ENCODE measurements at regions of chr6 and their contacts with region 1.

Region 1: GRCh38 chr6:112163295-112164257 is 76.2 kb downstream of the FAM229B start:
- DNase-seq: peak; percentile 90
- ATAC-seq: peak; percentile 98
- H3K4me3 Mint-ChIP-seq: peak overlapping the region; percentile 42
- H3K27ac Mint-ChIP-seq: no peak overlapping the region
- H3K4me1 Mint-ChIP-seq: peaks cover 12% of the 10 kb centered on the region
- H3K27me3 Mint-ChIP-seq: peaks cover 42% of the 10 kb centered on the region
- CTCF ChIP-seq: peak; percentile 97

Region 2: DNA sequence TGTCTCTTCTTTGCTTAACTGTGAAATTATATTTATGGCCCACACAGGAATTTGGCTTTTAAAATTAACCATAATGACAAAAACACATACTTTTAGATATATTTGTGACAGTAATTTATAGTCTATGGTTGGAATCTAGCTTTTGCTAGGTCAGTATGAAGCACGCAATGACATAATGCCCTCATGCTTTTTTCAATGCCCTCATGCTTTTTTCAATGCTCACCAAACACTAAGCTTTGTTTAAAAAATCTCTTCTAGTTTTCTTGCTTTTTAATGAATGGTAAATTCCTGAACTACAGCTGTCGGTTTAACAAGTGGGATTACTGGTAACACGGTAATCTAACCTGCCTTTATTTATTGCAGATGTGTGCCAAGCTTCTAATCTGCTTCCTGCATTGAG is 97.0 kb before region 1 on chr6:
- CTCF ChIA-PET with region 1: interaction called, 11 read pairs
- POLR2A ChIA-PET with region 1: no interaction called
- intact Hi-C with region 1: no loop called
- DNase-seq: no peak
- ATAC-seq: no peak
- H3K4me3 Mint-ChIP-seq: no peak overlapping the region
- H3K27ac Mint-ChIP-seq: no peak overlapping the region
- H3K4me1 Mint-ChIP-seq: no peaks in the 10 kb centered on the region
- H3K27me3 Mint-ChIP-seq: peaks cover 2% of the 10 kb centered on the region
- CTCF ChIP-seq: no peak

Region 3: DNA sequence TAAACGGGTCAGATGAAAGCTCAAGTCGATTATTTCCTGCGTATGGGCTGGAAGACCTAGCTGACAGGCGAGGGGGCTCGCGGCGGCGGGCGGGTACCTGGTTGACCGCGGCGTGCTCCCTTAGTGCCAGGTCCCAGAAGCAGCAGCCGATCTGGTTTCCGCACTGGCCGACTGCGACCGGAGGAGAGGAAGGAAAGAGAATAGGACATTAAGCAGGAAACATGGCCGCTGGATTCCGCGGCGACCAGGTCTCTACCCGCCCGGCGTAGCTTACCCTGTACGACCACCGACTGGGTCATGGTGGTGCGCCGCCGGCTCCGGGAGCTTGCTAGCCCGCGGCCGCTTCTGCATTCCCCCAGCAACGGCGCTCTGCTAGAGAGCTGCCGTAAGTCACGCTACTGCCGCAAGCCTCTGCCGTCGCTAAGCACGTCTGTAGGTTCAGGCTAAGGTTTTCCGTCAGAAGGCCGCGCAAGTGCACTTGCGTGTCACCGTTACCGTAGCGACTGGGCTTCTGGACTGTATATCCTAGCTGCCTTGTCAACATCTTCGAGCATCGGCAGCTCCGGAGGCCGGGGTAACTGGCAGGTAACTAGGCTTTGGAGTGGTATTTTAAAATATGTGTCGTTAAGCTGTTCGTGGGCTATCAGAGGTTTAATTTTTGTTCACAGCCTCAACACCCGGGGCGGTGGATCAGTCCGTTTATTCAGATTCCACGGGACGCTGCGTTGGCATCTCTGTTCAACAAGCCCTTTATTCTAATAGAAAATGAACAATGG is 76.3 kb before region 1 on chr6 and contains the starts of genes FAM229B and TUBE1:
- CTCF ChIA-PET with region 1: interaction called, 161 read pairs
- POLR2A ChIA-PET with region 1: interaction called, 8 read pairs
- intact Hi-C with region 1: loop called (anchors 1 kb)
- DNase-seq: peak; percentile 95
- ATAC-seq: peak; percentile 98
- H3K4me3 Mint-ChIP-seq: no peak within 1 kb of the TSS
- H3K27ac Mint-ChIP-seq: no peak within 1 kb of the TSS
- H3K4me1 Mint-ChIP-seq: peaks cover 12% of the 10 kb centered on the region
- H3K27me3 Mint-ChIP-seq: peaks cover 6% of the 10 kb centered on the region
- CTCF ChIP-seq: no peak
- total RNA-seq, gene FAM229B: 7.6 to 10.2 TPM
- total RNA-seq, gene TUBE1: 38.7 to 39.1 TPM

Region 4: GRCh38 chr6:112117554-112117953 is 46.0 kb before region 1 on chr6:
- CTCF ChIA-PET with region 1: interaction called, 23 read pairs
- POLR2A ChIA-PET with region 1: no interaction called
- intact Hi-C with region 1: loop called (anchors 5 kb)
- DNase-seq: peak; percentile 48
- ATAC-seq: peak; percentile 96
- H3K4me3 Mint-ChIP-seq: peak overlapping the region; percentile 5
- H3K27ac Mint-ChIP-seq: peak overlapping the region; percentile 85
- H3K4me1 Mint-ChIP-seq: peaks cover 26% of the 10 kb centered on the region
- H3K27me3 Mint-ChIP-seq: peaks cover 22% of the 10 kb centered on the region
- CTCF ChIP-seq: no peak